ENCODE measurements at regions of chr6 and their contacts with region 1.

Region 1: DNA sequence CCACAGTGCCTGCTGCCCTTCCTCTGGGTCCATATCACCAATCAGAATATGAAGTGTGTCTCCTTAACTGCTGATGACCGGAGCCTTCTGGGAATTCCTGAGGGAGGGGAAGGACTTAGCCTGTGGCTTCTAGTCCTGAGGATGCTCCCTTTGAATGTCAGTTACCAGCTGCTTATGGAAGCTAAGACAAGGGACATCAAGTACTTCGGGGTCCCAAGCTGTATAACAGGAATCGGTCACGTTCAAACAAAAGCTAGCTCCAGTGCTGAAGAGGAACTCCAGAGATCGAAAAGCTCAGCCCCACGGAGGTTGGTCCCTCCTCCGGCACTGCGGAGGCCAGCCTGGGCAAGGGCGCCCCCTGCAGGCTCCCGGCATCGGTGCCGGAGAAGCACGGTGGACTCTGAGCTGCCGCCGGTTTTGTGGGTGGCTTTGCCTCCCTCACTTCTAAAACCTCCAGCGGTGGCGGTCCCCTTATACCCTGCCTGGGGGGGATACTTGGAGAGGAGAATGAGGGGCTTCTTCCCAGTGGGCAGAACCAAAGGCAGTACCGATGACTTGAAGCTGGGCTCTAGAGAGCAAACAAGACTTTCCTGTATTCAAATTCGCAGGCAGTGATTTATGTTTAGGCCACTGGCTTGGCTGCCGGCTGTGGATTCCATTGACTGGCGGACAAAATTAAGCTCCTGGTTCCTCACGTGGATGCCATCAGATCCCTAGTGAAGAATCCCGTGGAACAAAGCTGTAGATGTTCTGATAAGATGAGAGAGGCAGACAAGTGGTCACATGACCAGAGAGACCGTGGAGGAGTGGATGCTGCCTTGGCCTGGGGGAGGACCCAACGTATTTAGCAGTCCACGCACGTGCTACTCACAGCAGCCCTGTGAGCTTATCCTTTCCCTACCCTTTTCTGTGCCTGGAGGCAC is 16.2 kb upstream of the UBR2 start:
- DNase-seq: peak; percentile 80 to 85
- ATAC-seq: peak; percentile 98 to 100 (median 99)
- H3K4me3 ChIP-seq: peak overlapping the region in 9 of 10 donors; percentile 21 to 64 (median 56)
- H3K27ac ChIP-seq: peak overlapping the region in 7 of 10 donors; percentile 11 to 75 (median 51)
- H3K4me1 ChIP-seq: peaks cover 0 to 16% (median 8%) of the 10 kb centered on the region in 9 donors
- H3K27me3 ChIP-seq: no peaks in the 10 kb centered on the region
- CTCF ChIP-seq: peak; percentile 93 to 100 (median 99)

Region 2: DNA sequence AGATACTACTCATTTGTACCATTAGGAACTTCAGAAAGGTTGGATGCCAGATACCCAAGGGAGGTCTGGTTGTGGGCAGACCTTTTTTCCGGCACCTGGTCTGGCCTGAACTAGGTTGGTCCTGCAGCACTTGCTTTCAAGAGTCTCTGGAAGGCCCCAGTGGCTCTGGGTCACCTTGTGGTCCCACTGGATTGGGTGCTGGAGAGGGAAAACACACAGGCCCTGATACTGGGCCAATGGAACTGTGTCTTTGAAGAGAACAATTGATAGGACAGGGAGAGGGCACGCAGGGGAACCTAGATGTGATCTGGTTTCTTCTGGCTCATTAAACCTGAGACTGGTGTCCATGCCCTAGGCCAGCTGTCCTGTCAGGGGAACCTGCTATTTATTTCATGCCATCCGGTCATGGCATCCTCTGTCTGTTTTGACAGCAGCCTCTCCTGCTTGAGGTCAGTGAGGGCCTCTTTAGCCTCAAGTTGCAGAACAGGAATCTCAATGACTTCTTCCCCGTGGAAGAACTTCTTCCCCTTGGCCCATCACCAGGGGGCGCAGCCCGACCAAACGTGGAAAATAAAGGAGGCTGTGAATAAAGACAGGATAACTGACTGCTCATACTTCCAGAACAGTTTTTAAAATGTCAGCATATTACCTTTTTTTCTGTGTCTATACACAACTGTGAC is 472.4 kb before region 1 on chr6:
- intact Hi-C with region 1: loop called in 5 of 10 experiments (anchors 5 to 10 kb)
- DNase-seq: peak; percentile 76 to 80
- ATAC-seq: peak; percentile 25 to 80 (median 70)
- H3K4me3 ChIP-seq: no peak overlapping the region
- H3K27ac ChIP-seq: peak overlapping the region in 8 of 10 donors; percentile 20 to 56 (median 36)
- H3K4me1 ChIP-seq: peaks cover 0 to 29% (median 14%) of the 10 kb centered on the region in 9 donors
- H3K27me3 ChIP-seq: no peaks in the 10 kb centered on the region
- CTCF ChIP-seq: peak; percentile 62 to 90 (median 85)

Region 3: DNA sequence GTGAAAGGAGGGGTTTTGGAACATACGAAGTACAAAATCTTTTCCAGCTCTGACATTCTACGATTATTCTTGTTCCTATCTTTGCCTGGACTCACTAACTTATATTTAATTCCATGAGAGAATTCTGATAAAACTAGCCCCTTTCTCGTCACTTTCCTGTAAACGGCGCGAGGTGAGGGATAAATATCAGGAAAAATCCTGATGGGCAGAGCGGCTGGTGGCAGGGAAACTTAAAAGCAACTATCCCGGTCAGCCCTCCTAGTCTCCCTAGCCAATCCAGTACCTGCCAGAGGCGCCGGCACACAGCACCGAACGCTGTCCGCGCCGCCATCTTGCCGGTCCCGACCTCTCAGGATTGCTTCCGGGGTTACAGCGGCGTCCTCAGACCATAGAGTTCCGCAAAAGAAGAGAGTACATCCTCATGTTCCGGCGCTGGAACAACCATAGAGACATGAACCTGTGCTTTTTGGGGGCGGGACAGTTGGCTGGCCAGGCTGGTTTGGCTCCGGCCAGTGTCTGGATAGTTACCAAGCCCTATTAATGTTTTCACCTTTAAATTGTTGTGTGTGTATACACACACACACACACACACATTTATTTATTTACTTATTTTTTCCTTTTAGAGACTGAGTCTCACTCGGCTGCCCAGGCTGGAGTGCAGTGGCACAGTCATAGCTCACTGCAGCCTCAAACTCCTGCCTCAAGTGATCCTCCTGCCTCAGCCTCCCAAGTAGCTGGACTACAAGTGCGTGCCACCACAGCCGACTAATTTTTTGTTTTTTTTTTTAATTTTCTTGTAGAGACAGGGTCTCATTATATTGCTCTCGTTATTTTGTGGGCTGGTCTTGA is 329.9 kb before region 1 on chr6 and contains the start of gene MRPS10:
- intact Hi-C with region 1: loop called in 3 of 10 experiments (anchors 5 to 10 kb)
- DNase-seq: peak; percentile 88 to 94
- ATAC-seq: peak; percentile 99 to 100 (median 100)
- H3K4me3 ChIP-seq: peak within 1 kb of the TSS; percentile 59 to 88 (median 77)
- H3K27ac ChIP-seq: peak within 1 kb of the TSS in 9 of 10 donors; percentile 49 to 89 (median 81)
- H3K4me1 ChIP-seq: peaks cover 0 to 28% (median 20%) of the 10 kb centered on the region in 9 donors
- H3K27me3 ChIP-seq: no peaks in the 10 kb centered on the region
- CTCF ChIP-seq: no peak
- total RNA-seq, gene MRPS10: 47.4 to 82.1 (median 63.1) TPM

Region 4: GRCh38 chr6:42224222-42224989 is 323.3 kb before region 1 on chr6:
- intact Hi-C with region 1: loop called in 3 of 10 experiments (anchors 5 to 10 kb)
- DNase-seq: no peak
- ATAC-seq: no peak
- H3K4me3 ChIP-seq: no peak overlapping the region
- H3K27ac ChIP-seq: no peak overlapping the region
- H3K4me1 ChIP-seq: peaks cover 0 to 15% (median 0%) of the 10 kb centered on the region in 9 donors
- H3K27me3 ChIP-seq: no peaks in the 10 kb centered on the region
- CTCF ChIP-seq: no peak

Region 5: GRCh38 chr6:42260972-42261371 is 286.7 kb before region 1 on chr6:
- intact Hi-C with region 1: loop called in 5 of 10 experiments (anchors 1 to 10 kb)
- DNase-seq: peak in 1 of 2 donors; percentile 54
- ATAC-seq: peak; percentile 53 to 80 (median 70)
- H3K4me3 ChIP-seq: peak overlapping the region in 1 of 10 donors; percentile 8
- H3K27ac ChIP-seq: peak overlapping the region in 4 of 10 donors; percentile 19 to 46 (median 32)
- H3K4me1 ChIP-seq: peaks cover 6 to 50% (median 16%) of the 10 kb centered on the region in 9 donors
- H3K27me3 ChIP-seq: no peaks in the 10 kb centered on the region
- CTCF ChIP-seq: peak in 8 of 9 donors; percentile 31 to 68 (median 61)

Region 6: DNA sequence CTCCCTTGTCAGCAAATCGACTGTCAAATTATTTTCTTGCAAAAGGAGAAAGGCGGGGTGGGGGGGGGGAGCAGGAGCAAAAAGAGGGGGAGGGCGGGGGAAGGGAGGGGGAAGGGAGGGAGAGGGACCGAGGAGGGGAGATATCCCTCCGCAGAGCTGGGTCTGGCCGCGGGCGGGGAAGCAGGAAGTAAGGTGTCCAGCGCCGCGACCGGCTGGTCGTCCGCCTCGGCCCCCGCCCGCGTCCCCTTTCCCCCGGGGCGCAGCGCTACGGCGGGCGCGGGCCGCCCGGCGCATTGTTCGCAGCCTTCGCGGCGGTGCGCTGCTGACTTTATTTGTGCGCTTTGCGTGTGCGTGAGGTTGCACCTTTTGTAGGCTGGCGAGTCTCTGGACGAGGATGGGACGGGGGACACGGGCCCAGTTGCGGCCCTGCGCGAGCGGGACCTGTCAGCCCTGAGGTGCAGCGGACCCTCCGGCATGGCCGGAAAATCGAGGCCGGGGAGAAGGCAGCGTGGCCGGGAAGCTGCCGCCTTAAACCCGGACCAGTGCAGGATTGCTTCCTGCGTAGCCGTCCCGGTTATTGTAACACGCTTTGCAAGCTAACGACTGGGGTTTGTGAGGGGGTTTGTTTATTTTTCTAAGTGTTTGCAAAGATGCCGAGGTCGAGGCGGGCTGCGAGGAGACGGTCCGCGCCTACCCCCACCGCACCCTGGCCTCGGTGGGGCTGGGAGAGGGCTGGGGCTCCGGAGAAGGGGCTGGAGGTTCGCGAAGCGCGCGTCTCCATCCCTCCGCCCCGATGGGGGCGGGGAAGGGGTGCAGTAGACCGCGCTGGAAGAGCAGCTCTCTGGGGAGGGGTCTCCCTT is 95.3 kb before region 1 on chr6:
- intact Hi-C with region 1: no loop called
- DNase-seq: peak; percentile 73 to 78
- ATAC-seq: peak; percentile 37 to 85 (median 53)
- H3K4me3 ChIP-seq: peak overlapping the region; percentile 61 to 91 (median 80)
- H3K27ac ChIP-seq: peak overlapping the region; percentile 68 to 97 (median 92)
- H3K4me1 ChIP-seq: peaks cover 3 to 46% (median 21%) of the 10 kb centered on the region in 9 donors
- H3K27me3 ChIP-seq: no peaks in the 10 kb centered on the region
- CTCF ChIP-seq: no peak